ENCODE measurements at regions of chr1 and their contacts with region 1.

Region 1: DNA sequence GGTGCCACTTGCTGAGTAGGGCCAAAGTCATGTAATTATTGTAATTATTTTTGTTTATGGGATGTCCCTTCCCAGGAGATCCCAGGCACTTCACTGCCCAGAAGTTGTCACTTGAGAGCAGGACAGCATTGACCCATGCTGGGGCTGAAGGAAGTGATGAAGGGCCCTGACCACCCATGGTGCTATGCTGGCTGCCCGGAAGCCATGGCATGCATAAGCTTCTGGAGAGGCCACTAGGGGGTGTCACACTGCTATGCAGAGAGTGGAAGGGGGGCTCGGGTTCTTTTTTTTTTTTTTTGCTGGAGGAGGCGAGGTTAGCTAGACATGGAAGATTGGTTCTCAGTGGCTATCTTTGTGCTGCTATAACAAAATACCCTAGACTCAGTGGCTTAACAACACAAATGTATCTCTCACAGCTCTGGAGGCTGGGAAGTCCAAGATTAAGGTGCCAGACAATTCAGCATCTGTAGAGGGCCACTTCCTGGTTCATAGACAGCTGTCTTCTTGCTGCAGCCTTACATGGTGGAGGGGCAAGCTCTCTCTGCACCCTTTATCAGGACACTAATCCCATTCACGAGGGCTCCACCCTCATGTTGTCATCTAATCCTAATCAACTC is 84.9 kb downstream of the CNIH3 start:
- DNase-seq: no peak
- H3K4me3 ChIP-seq: no peak overlapping the region
- H3K27ac ChIP-seq: no peak overlapping the region
- H3K4me1 ChIP-seq: no peaks in the 10 kb centered on the region
- H3K27me3 ChIP-seq: no peaks in the 10 kb centered on the region
- CTCF ChIP-seq: no peak
- EP300 ChIP-seq: no peak
- POLR2A ChIP-seq: no peak

Region 2: DNA sequence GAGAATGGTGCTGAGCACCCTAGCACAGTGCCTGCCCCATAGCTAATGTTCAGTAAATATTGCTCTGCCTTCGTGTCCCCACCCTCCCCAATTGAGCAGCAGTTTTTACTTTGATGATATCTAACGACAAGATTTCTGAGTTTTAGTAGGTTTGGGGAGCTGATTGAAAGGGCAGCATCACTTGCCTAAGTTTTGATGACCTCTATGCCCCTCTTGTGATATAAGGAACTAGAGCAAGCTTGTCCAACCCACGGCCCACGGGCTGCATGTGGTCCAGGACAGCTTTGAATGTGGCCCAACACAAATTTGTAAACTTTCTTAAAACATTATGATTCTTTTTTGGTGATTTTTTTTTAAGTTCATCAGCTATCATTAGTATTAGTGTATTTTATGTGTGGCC is 342.8 kb before region 1 on chr1:
- in situ Hi-C with region 1: no loop called
- intact Hi-C with region 1: no loop called
- DNase-seq: no peak
- H3K4me3 ChIP-seq: peak overlapping the region in 3 of 4 donors; percentile 51 to 97 (median 95)
- H3K27ac ChIP-seq: peak overlapping the region; percentile 86 to 97 (median 94)
- H3K4me1 ChIP-seq: peaks cover 7 to 58% (median 28%) of the 10 kb centered on the region in 4 donors
- H3K27me3 ChIP-seq: no peaks in the 10 kb centered on the region
- CTCF ChIP-seq: no peak
- EP300 ChIP-seq: no peak
- POLR2A ChIP-seq: no peak

Region 3: DNA sequence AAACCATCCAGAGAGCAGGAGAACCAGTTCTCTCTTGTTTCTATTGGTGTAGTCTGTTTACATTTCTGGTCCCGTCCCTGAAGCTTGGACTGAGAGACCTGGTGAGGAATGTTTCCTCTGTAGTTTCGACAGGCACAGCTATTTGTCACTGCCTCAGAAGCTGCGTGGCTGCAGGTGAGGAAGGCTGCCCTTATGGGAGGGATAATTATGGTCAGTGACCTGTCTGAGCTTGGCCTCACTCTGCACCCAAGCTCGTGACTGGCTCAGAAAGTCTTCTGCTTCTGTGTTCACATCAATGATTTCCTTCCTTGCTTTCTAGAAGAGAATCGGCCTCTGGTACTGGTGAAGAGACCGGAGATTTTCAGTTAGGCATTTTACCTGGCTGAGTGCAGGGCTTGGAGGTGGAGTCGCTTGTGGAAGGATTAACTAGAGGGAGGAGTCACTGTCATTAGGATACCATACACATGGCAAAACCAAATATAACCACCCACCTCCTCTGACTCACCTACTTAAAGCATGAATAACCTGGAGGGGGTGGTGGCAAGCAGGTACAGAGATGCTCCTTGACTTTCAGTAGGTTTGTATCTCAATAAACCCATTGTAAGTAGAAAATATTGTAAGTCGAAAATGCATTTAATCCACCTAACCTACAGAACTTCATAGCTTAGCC is 246.5 kb before region 1 on chr1:
- in situ Hi-C with region 1: no loop called
- intact Hi-C with region 1: no loop called
- DNase-seq: peak; percentile 59
- H3K4me3 ChIP-seq: peak overlapping the region in 2 of 4 donors; percentile 10 to 16
- H3K27ac ChIP-seq: peak overlapping the region; percentile 61 to 86 (median 77)
- H3K4me1 ChIP-seq: peaks cover 23 to 45% (median 33%) of the 10 kb centered on the region in 4 donors
- H3K27me3 ChIP-seq: no peaks in the 10 kb centered on the region
- CTCF ChIP-seq: no peak
- EP300 ChIP-seq: no peak
- POLR2A ChIP-seq: peak; percentile 45

Region 4: GRCh38 chr1:224800486-224801119 is 99.6 kb after region 1 on chr1:
- in situ Hi-C with region 1: loop called in 1 of 4 experiments (anchors 25 kb)
- intact Hi-C with region 1: no loop called
- DNase-seq: no peak
- H3K4me3 ChIP-seq: no peak overlapping the region
- H3K27ac ChIP-seq: no peak overlapping the region
- H3K4me1 ChIP-seq: no peaks in the 10 kb centered on the region
- H3K27me3 ChIP-seq: no peaks in the 10 kb centered on the region
- CTCF ChIP-seq: no peak
- EP300 ChIP-seq: no peak
- POLR2A ChIP-seq: no peak

Region 5: DNA sequence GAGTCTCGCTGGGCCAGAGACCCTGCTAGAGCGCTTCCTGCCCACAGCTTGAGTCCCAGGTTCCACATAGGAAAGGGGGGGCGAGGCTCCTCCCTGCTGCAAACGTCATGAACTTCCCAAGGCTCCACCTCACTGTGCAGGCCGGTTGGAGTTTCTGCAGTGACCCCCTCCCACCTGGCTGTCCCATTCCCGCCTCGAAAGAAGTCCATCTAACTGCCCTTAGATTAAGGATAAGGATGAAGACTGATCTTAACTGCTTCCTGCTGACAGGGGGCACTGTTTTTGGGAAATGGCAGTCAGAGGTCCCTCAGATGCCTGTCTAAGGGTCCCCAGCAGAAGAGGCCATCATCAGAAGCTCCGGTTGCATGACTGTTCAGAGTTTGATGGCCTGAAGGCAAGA is 1910.3 kb after region 1 on chr1:
- in situ Hi-C with region 1: no loop called
- intact Hi-C with region 1: no loop called
- DNase-seq: no peak
- H3K4me3 ChIP-seq: no peak overlapping the region
- H3K27ac ChIP-seq: no peak overlapping the region
- H3K4me1 ChIP-seq: no peaks in the 10 kb centered on the region
- H3K27me3 ChIP-seq: no peaks in the 10 kb centered on the region
- CTCF ChIP-seq: no peak
- EP300 ChIP-seq: no peak
- POLR2A ChIP-seq: no peak